A549 (cell line): ENCODE measurements at regions of chr20 and their contacts with region 1.

Region 1: DNA sequence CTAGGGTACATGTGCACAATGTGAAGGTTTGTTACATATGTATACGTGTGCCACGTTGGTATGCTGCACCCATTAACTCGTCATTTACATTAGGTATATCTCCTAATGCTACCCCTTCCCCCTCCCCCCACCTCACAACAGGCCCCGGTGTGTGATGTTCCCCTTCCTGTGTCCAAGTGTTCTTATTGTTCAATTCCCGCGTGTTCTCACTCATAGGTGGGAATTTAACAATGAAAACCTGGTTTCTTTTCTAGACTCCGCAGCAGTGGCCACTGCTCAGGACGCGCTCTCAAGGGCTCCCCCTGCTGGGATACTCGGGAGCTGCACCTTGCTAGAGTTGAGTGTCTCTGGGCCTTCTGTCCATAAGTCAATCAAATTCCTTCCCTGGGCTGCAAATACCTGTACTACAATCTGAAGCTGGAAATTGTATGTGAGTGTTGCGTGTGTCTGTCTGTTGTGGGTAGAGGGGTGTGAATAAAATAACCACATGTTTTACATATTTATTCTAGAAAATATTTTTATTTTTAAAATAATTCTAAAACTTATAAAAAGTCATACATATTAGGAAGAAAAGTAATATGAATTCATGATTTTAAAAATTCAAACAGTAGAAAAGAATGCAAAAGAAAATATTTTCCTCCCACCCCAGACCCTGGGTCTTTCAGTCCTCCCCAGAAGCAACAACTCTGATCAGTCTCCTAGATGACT is 8.2 kb upstream of the CEP250 start:
- DNase-seq: peak; percentile 77 to 86
- ATAC-seq: peak; percentile 95
- H3K4me3 ChIP-seq: peak overlapping the region; percentile 38
- H3K27ac ChIP-seq: peak overlapping the region; percentile 59 to 77
- H3K4me1 ChIP-seq: no peaks in the 10 kb centered on the region
- CTCF ChIP-seq: peak; percentile 84
- EP300 ChIP-seq: no peak
- POLR2A ChIP-seq: no peak
- RAD21 ChIP-seq: peak; percentile 71 to 73

Region 2: DNA sequence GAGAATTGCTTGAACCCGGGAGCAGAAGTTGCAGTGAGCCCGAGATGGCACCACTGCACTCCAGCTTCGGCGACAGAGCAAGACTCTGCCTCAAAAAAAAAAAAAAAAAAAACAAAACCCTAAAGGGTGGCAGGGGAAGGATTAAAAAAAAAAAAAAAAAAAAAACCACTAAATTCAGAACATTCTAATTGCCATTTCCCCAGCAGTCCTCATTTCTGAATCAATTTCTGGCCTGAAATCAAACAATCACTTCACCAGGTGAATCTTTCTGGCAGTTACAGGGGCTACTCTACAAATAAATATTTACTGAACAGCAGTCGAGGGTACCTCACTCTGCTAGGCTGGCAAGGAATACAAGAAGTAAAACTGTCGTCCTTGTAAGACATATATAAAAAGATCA is 36.6 kb before region 1 on chr20:
- CTCF ChIA-PET with region 1: interaction called, 14 read pairs
- POLR2A ChIA-PET with region 1: interaction called, 4 read pairs
- DNase-seq: no peak
- ATAC-seq: no peak
- H3K4me3 ChIP-seq: peak overlapping the region; percentile 67
- H3K27ac ChIP-seq: peak overlapping the region in 1 of 2 experiments; percentile 90; a peak in 2 of 6 replicates
- H3K4me1 ChIP-seq: peaks cover 9% of the 10 kb centered on the region; the same call in 1 of the 3 replicates
- CTCF ChIP-seq: no peak
- EP300 ChIP-seq: no peak
- POLR2A ChIP-seq: no peak
- RAD21 ChIP-seq: no peak

Region 3: DNA sequence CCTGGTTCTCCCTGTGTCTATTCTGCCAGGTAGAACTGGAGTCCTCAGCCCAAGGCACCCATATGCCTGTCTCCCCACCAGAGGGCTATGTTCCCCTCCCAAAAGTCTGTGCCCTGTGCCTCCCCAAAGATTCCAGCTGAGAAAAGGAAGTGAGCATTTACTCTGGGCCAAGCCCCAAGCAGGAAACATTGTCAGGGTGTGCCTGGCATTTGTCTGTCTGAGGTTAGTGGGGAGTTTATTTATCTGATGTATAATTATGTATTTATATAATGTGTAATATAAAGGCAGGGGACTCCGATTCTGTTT is 14.9 kb before region 1 on chr20:
- CTCF ChIA-PET with region 1: interaction called, 72 read pairs
- POLR2A ChIA-PET with region 1: no interaction called
- DNase-seq: no peak
- ATAC-seq: peak in 1 of 2 experiments; percentile 37; a peak in 3 of 6 replicates
- H3K4me3 ChIP-seq: no peak overlapping the region
- H3K27ac ChIP-seq: no peak overlapping the region
- H3K4me1 ChIP-seq: no peaks in the 10 kb centered on the region
- CTCF ChIP-seq: no peak
- EP300 ChIP-seq: no peak
- POLR2A ChIP-seq: no peak
- RAD21 ChIP-seq: no peak